HepG2 (cell line): ENCODE measurements at regions of chr6 and their contacts with region 1.

Region 1: DNA sequence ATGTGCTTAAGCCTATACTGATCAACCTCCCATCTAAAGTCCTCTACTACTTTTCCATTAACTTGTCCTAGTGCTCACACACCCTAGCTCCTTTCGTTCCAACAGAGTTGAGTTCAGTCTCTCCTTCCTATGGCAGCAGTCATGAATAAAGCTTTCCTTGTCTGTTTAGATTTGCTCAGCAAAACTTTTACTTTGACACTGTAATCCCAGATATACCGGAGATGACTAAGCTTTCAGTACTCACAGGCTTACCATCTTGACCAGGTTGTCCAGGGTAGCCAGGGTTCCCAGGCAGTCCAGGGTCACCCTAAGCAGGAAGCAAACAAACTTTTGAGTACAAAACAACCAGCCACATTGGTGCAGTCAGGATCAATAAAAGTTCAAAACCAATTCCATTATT is 90.7 kb downstream of the COL21A1 start:
- DNase-seq: peak; percentile 82
- ATAC-seq: peak; percentile 98
- H3K4me3 ChIP-seq: no peak overlapping the region
- H3K27ac ChIP-seq: peak overlapping the region; percentile 25
- H3K4me1 ChIP-seq: peaks cover 23% of the 10 kb centered on the region
- H3K27me3 ChIP-seq: no peaks in the 10 kb centered on the region
- CTCF ChIP-seq: no peak
- EP300 ChIP-seq: peak in 1 of 2 experiments; percentile 82; a peak in 2 of 4 replicates
- POLR2A ChIP-seq: no peak
- RAD21 ChIP-seq: no peak

Region 2: DNA sequence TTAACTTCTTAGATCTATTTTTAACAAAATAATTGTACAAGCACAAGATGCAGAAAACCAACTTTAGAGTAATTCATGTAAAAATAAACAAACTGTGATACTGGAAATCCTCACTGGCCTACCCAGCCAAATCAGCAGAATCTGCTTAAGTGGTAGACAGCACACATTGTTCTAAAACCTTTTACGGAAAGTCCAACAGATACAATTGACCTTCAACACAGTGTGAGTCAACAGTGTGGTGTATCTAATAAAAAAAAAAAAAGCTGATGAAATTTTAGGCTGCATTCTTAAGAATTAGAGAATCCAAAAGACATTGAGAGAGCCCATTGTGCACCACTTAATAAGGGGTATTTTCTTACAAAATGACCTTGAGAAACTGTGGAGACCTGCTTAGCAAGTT is 83.8 kb before region 1 on chr6:
- CTCF ChIA-PET with region 1: no interaction called
- POLR2A ChIA-PET with region 1: no interaction called
- in situ Hi-C with region 1: no loop called
- intact Hi-C with region 1: no loop called
- DNase-seq: no peak
- ATAC-seq: no peak
- H3K4me3 ChIP-seq: no peak overlapping the region
- H3K27ac ChIP-seq: no peak overlapping the region
- H3K4me1 ChIP-seq: no peaks in the 10 kb centered on the region
- H3K27me3 ChIP-seq: no peaks in the 10 kb centered on the region
- CTCF ChIP-seq: no peak
- EP300 ChIP-seq: no peak
- POLR2A ChIP-seq: no peak
- RAD21 ChIP-seq: no peak

Region 3: DNA sequence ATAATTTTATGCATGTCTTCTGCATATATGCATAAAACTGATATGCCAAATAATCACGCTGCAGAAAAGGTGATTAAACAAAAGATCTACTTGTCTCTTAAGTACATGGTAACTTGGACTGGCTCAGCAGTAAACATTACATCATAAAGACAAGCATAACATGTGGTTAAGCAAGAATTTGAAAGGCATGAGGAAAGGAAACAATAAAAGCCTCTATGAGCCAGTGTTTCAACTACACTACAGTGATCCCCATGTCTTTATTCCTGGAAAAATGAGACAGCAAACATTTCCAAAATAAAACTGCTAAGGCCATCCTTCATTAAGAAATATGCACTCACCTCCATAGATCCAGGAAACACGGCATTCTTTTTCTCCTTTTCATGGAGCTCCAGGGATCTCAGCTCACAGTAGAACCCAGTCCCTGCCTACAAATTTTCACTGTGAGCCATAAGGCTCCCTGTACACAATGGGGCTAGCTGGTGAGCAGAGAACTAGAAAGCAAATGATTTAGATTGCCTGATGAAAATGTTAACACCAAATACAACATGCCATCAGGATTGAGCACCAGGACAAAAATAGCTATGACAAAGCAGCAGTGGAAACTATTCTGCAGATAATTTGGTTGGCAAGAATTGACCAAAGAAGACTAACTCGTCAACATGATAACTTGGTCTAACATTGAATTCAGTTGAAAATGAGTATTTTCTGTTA is 65.3 kb before region 1 on chr6:
- CTCF ChIA-PET with region 1: no interaction called
- POLR2A ChIA-PET with region 1: no interaction called
- in situ Hi-C with region 1: no loop called
- intact Hi-C with region 1: loop called (anchors 10 kb)
- DNase-seq: peak; percentile 91
- ATAC-seq: peak; percentile 96
- H3K4me3 ChIP-seq: no peak overlapping the region
- H3K27ac ChIP-seq: peak overlapping the region; percentile 29
- H3K4me1 ChIP-seq: peaks cover 13% of the 10 kb centered on the region
- H3K27me3 ChIP-seq: no peaks in the 10 kb centered on the region
- CTCF ChIP-seq: no peak
- EP300 ChIP-seq: peak; percentile 47 to 72; a peak in 2 of 4 replicates
- POLR2A ChIP-seq: no peak
- RAD21 ChIP-seq: no peak